GM12878 (cell line): ENCODE measurements at regions of chr3 and their contacts with region 1.

Region 1: DNA sequence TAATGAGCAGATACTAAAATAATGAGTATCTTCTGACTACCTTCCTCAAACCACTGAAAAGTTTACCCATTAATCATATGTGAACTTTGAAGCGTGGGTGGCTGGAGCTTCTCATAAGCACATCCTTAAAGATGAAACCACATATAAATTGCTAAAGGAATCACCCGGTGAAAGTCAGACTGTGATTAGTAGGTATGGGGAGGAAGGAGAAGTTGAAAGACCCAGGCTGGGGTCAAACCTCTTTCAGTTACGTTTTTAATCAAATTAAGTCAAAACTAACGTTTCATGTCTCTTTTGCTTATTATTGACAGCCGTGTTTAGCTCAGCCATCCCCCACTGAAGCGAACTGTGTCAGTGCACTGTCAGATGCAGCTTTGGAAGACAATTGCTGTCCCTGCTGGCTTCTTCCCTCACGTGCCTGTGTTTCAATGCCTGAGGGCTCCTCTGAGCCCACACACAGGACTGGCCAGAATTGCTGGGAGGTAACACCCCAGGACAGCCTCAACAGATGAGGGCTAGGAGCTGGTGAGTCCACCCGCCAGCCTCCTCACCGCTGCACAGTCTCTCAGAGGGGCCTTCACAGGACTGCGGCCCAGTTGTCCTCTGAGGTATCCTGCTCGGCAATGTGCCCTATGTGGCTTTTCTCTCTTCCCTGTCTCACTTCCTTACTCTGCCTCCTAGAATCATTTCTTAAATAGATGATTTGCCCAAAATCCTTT is 29.3 kb upstream of the SH3BP5 start:
- DNase-seq: peak; percentile 99
- ATAC-seq: peak; percentile 82
- H3K4me3 ChIP-seq: peak overlapping the region; percentile 40; the same call in 1 of the 2 replicates
- H3K27ac ChIP-seq: peak overlapping the region; percentile 84
- H3K4me1 ChIP-seq: peaks cover 47% of the 10 kb centered on the region
- H3K27me3 ChIP-seq: no peaks in the 10 kb centered on the region
- CTCF ChIP-seq: no peak
- EP300 ChIP-seq: peak in 1 of 2 experiments; percentile 98
- POLR2A ChIP-seq: peak; percentile 63
- RAD21 ChIP-seq: peak; percentile 2

Region 2: DNA sequence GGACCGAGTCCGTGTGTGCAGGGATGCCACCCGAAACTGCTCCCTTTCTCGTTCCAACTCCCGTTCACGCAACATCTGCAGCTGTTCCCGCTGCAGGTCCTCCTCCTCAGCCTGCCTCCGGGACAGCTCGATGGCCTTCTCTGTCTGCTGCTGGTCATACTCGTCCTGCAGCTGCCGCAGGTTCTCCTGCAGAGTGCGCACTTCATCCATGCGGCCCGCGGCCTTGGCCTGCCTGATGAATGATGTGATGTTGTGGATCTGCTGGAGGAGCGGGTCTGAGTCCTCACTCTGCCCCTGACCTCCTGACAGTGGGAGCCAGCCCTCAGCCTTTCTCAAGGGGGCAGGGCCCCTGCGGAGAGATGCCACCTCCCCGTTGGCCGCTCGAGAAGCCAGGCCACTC is 287.2 kb before region 1 on chr3:
- CTCF ChIA-PET with region 1: no interaction called
- POLR2A ChIA-PET with region 1: no interaction called
- RAD21 ChIA-PET with region 1: no interaction called
- SMC1A ChIA-PET with region 1: no interaction called
- in situ Hi-C with region 1: no loop called
- intact Hi-C with region 1: no loop called
- DNase-seq: no peak
- ATAC-seq: no peak
- H3K4me3 ChIP-seq: no peak overlapping the region
- H3K27ac ChIP-seq: no peak overlapping the region
- H3K4me1 ChIP-seq: no peaks in the 10 kb centered on the region
- H3K27me3 ChIP-seq: no peaks in the 10 kb centered on the region
- CTCF ChIP-seq: no peak
- EP300 ChIP-seq: no peak
- POLR2A ChIP-seq: no peak
- RAD21 ChIP-seq: no peak

Region 3: DNA sequence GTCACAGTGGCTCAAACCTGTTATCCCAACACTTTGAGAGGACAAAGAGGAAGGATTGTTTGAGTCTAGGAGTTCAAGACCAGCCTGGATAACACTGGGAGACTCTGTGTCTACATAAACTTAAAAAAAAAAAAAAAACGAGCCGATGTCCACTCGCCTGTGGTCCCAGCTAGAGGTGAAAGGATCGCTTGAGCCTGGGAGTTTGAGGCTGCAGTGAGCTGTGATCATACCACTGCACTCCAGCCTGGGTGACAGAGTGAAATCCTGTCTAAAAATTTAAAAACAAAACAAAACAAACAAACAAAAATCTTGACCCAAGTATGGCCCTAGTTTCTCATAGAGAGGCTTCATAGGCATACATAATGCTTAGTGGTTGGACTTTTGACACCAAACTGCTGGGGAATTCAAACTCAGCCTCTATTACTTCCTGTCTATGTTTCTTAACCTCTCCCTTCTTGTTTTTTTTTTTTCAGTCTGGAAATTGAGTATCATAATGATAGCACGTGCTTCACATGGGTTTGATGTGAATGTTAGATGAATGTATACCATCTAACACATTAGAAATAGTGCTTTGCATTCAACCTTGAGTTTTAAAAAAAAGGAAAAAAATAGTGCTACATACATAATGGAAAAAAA is 202.0 kb before region 1 on chr3:
- CTCF ChIA-PET with region 1: no interaction called
- POLR2A ChIA-PET with region 1: no interaction called
- RAD21 ChIA-PET with region 1: no interaction called
- SMC1A ChIA-PET with region 1: no interaction called
- in situ Hi-C with region 1: no loop called
- intact Hi-C with region 1: no loop called
- DNase-seq: peak; percentile 11
- ATAC-seq: peak; percentile 91
- H3K4me3 ChIP-seq: no peak overlapping the region
- H3K27ac ChIP-seq: no peak overlapping the region
- H3K4me1 ChIP-seq: no peaks in the 10 kb centered on the region
- H3K27me3 ChIP-seq: peaks cover 0 to 8% of the 10 kb centered on the region in 2 experiments; a peak in 1 of 4 replicates
- CTCF ChIP-seq: no peak
- EP300 ChIP-seq: no peak
- POLR2A ChIP-seq: no peak
- RAD21 ChIP-seq: no peak

Region 4: GRCh38 chr3:15309662-15310335 is 51.9 kb before region 1 on chr3:
- CTCF ChIA-PET with region 1: no interaction called
- POLR2A ChIA-PET with region 1: interaction called, 7 read pairs
- RAD21 ChIA-PET with region 1: interaction called, 20 read pairs
- SMC1A ChIA-PET with region 1: interaction called, 5 read pairs
- in situ Hi-C with region 1: no loop called
- intact Hi-C with region 1: no loop called
- DNase-seq: no peak
- ATAC-seq: peak; percentile 33
- H3K4me3 ChIP-seq: no peak overlapping the region
- H3K27ac ChIP-seq: peak overlapping the region; percentile 78
- H3K4me1 ChIP-seq: peaks cover 44% of the 10 kb centered on the region
- H3K27me3 ChIP-seq: no peaks in the 10 kb centered on the region
- CTCF ChIP-seq: no peak
- EP300 ChIP-seq: no peak
- POLR2A ChIP-seq: no peak
- RAD21 ChIP-seq: no peak

Region 5: DNA sequence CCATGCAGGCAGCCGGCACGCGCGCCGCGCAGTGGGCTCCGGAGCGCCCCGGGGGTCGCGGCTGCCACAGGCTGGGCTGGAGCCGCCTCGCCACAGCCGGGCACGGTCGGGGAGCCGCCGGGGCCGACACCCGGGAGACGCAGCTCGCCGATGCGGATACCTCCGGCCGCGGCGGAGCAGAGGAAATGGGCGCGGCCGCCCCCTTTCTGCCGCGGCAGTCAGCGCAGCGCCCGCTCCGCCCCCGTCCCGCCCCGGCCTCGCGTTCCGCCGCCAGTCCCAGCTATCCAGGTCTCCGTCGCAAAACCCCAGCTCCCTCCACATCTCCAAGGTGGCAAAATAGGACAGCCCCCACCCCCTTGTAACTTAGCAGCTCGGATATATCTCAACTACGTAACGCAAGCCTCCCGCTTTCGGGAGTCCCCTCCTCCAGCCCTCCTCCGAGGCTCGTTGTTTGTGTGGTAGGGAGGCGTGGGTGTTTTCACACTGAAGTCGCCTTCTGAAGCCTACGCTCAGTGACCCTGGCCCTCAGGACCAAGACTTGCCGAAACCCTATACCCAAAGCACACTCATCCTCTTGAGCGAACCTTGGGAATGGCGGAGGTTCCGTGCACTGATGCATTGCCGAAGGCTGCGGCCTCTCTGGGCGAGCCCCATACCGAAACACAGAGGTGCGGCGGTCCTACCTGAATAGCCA is 29.1 kb before region 1 on chr3 and contains the start of gene SH3BP5:
- CTCF ChIA-PET with region 1: interaction called, 15 read pairs
- POLR2A ChIA-PET with region 1: interaction called, 5 read pairs
- RAD21 ChIA-PET with region 1: interaction called, 53 read pairs
- SMC1A ChIA-PET with region 1: interaction called, 14 read pairs
- in situ Hi-C with region 1: no loop called
- intact Hi-C with region 1: loop called (anchors 1 kb)
- DNase-seq: no peak
- ATAC-seq: peak; percentile 85
- H3K4me3 ChIP-seq: peak within 1 kb of the TSS; percentile 86
- H3K27ac ChIP-seq: peak within 1 kb of the TSS; percentile 41
- H3K4me1 ChIP-seq: peaks cover 36% of the 10 kb centered on the region
- H3K27me3 ChIP-seq: no peaks in the 10 kb centered on the region
- CTCF ChIP-seq: peak; percentile 53 to 67 (median 59); a peak in 5 of 6 replicates
- EP300 ChIP-seq: no peak; a peak in 1 of 4 replicates
- POLR2A ChIP-seq: peak; percentile 84
- RAD21 ChIP-seq: peak; percentile 31; the same call in 1 of the 2 replicates
- polyA plus RNA-seq, gene SH3BP5: 14.9 to 33.8 TPM

Region 6: DNA sequence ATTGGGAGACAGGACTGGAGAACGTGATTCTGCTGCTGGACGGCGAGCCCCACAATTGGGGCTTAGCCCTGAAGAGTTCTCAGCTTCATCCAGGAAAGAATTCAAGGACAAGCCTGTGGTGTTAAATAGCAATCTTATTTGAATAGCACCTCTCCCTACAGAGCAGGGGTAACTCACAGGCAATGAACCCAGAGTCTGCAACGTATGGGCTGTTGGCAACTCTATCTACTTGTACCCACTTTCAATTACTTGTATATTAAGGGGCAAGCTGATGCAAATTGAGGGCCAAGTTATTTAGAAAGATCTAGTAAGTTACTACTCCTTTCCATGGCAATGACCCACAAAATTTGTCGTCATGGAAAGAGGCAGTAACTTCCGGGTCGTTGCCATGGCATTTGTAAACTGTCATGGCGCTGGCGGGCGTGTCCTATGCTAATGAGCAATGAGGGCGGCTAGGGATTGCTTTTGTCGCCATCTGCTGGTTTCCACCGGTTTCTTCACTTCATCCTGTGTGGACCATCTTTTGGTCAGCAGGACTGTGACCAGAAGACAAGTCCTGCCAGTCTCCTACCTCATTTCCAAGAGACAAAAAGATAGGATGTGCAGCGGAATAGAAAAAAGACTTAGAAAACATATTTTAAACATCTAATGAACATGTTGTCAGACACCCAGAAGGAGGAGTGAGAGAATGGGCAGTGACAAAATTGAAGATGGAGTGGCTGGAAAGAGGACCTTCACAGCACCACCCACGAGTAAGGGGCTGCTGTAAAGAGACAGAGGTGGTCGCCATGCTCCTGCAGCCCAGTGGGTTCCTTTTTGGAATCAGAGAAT is 16.5 kb after region 1 on chr3:
- CTCF ChIA-PET with region 1: interaction called, 16 read pairs
- POLR2A ChIA-PET with region 1: interaction called, 13 read pairs
- RAD21 ChIA-PET with region 1: interaction called, 35 read pairs
- SMC1A ChIA-PET with region 1: interaction called, 49 read pairs
- in situ Hi-C with region 1: no loop called
- intact Hi-C with region 1: loop called (anchors 1 kb)
- DNase-seq: peak; percentile 81
- ATAC-seq: peak; percentile 95
- H3K4me3 ChIP-seq: no peak overlapping the region
- H3K27ac ChIP-seq: peak overlapping the region; percentile 27; the same call in 1 of the 2 replicates
- H3K4me1 ChIP-seq: peaks cover 16% of the 10 kb centered on the region
- H3K27me3 ChIP-seq: no peaks in the 10 kb centered on the region
- CTCF ChIP-seq: peak; percentile 82 to 92 (median 86)
- EP300 ChIP-seq: peak; percentile 44 to 85; a peak in 2 of 4 replicates
- POLR2A ChIP-seq: no peak
- RAD21 ChIP-seq: peak; percentile 80

Region 7: DNA sequence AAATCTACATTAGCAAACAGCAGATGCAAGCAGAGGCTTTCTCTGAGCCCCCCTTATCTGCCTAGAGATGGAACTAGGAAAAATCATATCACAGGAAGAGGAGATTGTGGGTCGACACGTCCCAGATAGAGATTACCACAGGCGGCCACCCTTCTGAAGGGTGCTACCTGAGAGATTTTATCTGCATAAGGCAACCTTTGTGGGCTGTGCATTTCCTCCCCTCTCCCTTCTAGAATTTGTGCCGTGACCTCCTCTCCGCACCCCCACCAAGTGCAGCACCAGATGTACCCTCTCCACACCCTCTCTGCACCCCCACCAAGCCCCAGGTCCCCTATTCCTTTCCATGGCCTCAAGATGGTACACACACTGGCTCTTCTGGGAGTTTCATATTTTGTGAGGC is 38.3 kb after region 1 on chr3:
- CTCF ChIA-PET with region 1: interaction called, 26 read pairs
- POLR2A ChIA-PET with region 1: no interaction called
- RAD21 ChIA-PET with region 1: interaction called, 15 read pairs
- SMC1A ChIA-PET with region 1: interaction called, 10 read pairs
- in situ Hi-C with region 1: no loop called
- intact Hi-C with region 1: loop called (anchors 1 kb)
- DNase-seq: no peak
- ATAC-seq: no peak
- H3K4me3 ChIP-seq: no peak overlapping the region
- H3K27ac ChIP-seq: no peak overlapping the region
- H3K4me1 ChIP-seq: peaks cover 10% of the 10 kb centered on the region
- H3K27me3 ChIP-seq: no peaks in the 10 kb centered on the region
- CTCF ChIP-seq: no peak
- EP300 ChIP-seq: no peak
- POLR2A ChIP-seq: no peak
- RAD21 ChIP-seq: no peak

Region 8: GRCh38 chr3:15831930-15832329 is 470.3 kb after region 1 on chr3:
- CTCF ChIA-PET with region 1: no interaction called
- POLR2A ChIA-PET with region 1: no interaction called
- RAD21 ChIA-PET with region 1: no interaction called
- SMC1A ChIA-PET with region 1: no interaction called
- in situ Hi-C with region 1: no loop called
- intact Hi-C with region 1: no loop called
- DNase-seq: no peak
- ATAC-seq: no peak
- H3K4me3 ChIP-seq: no peak overlapping the region
- H3K27ac ChIP-seq: no peak overlapping the region
- H3K4me1 ChIP-seq: no peaks in the 10 kb centered on the region
- H3K27me3 ChIP-seq: no peaks in the 10 kb centered on the region
- CTCF ChIP-seq: no peak
- EP300 ChIP-seq: no peak
- POLR2A ChIP-seq: no peak
- RAD21 ChIP-seq: no peak